ENCODE measurements at regions of chr18 and their contacts with region 1.

Region 1: GRCh38 chr18:44679056-44679905 is 1.4 kb upstream of the SETBP1 start:
- DNase-seq: peak; percentile 83
- H3K4me3 Mint-ChIP-seq: peak overlapping the region; percentile 52
- H3K27ac Mint-ChIP-seq: no peak overlapping the region
- H3K4me1 Mint-ChIP-seq: peaks cover 7% of the 10 kb centered on the region
- H3K27me3 Mint-ChIP-seq: peaks cover 22% of the 10 kb centered on the region

Region 2: GRCh38 chr18:43714343-43715010 is 964.8 kb before region 1 on chr18:
- CTCF ChIA-PET with region 1: no interaction called
- intact Hi-C with region 1: no loop called
- DNase-seq: no peak
- H3K4me3 Mint-ChIP-seq: no peak overlapping the region
- H3K27ac Mint-ChIP-seq: no peak overlapping the region
- H3K4me1 Mint-ChIP-seq: no peaks in the 10 kb centered on the region
- H3K27me3 Mint-ChIP-seq: no peaks in the 10 kb centered on the region

Region 3: GRCh38 chr18:44758861-44759631 is 79.8 kb after region 1 on chr18:
- CTCF ChIA-PET with region 1: no interaction called
- intact Hi-C with region 1: loop called (anchors 1 kb)
- DNase-seq: peak; percentile 76
- H3K4me3 Mint-ChIP-seq: no peak overlapping the region
- H3K27ac Mint-ChIP-seq: peak overlapping the region; percentile 80
- H3K4me1 Mint-ChIP-seq: peaks cover 27% of the 10 kb centered on the region
- H3K27me3 Mint-ChIP-seq: peaks cover 6% of the 10 kb centered on the region

Region 4: DNA sequence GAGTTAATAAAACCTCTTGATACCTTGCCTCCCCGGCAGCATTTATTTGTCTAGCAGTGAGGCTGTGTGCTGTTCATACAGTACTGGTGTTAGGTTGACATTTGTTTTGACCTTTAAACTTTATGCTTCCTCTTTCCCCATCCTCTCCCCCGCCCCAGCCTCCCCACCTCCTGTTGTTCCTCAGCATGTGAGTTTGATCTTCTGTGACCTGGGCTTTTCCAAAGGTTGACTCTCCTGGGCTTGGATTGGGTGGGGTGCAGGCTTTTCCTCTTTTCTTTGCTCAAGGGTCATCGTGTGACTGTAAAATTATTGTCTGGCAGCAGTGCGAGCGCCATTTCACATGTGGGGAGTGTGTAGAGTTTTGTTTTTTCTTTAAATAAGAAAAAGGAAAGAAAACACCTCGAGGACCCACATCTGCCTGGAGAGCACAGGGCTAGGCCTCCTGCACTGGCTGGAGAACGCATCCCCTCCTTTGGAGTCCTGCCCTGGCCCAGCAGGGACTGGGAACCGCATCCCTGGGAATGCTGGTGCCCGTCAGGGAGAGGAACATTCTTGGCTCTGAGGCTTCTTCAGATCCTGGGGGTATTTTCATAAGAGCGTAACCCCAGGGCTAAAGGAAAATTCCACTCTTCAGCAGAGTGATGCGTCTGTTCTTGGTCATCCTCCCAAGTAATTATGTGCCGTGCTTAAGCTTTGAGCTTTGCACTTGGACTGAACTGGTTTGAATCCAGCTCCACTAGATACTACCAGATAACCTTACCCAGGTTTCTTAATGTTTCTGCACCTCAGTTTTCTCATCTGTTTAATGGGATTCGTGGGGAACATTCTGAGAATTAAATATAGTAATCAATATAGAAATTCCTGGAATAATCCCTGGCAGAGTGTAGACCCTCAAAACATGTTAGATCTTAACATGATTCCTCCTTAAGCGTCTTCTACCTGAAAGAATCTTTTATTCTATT is 93.0 kb after region 1 on chr18:
- CTCF ChIA-PET with region 1: no interaction called
- intact Hi-C with region 1: no loop called
- DNase-seq: no peak
- H3K4me3 Mint-ChIP-seq: no peak overlapping the region
- H3K27ac Mint-ChIP-seq: no peak overlapping the region
- H3K4me1 Mint-ChIP-seq: peaks cover 2% of the 10 kb centered on the region
- H3K27me3 Mint-ChIP-seq: peaks cover 16% of the 10 kb centered on the region

Region 5: DNA sequence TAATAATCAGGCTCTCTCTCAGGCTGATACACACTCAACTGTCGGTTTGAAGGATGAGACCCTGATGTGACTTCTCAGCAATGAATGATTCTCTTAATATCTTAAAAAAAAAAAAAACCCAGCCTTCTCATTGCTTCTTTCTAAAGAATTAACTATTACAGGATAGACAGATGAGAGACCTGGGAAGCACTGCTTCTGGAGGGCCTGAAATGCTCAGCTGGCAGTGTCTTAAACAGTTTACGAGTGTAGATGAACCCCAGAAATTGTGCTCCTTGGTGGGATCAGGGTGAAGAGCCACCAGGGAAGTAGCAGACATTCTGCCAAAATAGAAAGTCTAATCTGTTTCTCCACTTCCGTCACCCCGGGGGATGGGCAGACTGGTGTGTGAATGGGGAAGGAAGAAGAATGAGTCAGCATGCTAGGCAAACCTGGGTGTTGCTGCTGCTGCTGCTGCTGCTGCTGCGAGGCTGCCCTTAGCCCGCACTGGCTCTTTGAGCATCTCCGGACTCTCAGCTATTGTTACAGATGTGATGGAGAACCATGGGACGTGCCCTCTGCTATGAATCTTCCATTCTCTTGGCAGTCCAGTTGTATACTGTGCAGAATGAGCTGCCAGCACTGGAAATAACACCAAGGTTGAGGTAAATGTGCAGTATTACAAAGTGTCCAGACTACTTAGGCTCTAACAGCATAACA is 159.8 kb after region 1 on chr18:
- CTCF ChIA-PET with region 1: no interaction called
- intact Hi-C with region 1: loop called (anchors 1 kb)
- DNase-seq: peak; percentile 85
- H3K4me3 Mint-ChIP-seq: no peak overlapping the region
- H3K27ac Mint-ChIP-seq: no peak overlapping the region
- H3K4me1 Mint-ChIP-seq: peaks cover 12% of the 10 kb centered on the region
- H3K27me3 Mint-ChIP-seq: peaks cover 22% of the 10 kb centered on the region

Region 6: DNA sequence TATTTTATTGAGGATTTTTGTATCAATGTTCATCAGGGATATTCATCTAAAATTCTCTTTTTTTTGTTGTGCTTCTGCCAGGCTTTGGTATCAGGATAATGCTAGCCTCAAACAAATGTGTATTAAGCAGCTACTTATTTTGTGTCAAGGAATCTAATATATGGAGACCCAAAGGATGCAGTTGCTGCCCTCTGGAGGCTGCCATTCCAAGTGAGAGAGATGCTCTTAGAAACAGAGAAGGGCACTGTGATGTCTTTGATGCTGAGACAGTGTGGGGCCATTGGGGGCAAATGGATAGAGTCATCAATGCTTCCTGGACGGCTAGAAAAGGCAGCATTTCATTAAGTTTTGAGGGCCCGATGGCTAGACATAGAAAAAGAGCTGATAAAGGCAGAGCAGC is 294.0 kb after region 1 on chr18:
- CTCF ChIA-PET with region 1: no interaction called
- intact Hi-C with region 1: loop called (anchors 1 kb)
- DNase-seq: peak; percentile 28
- H3K4me3 Mint-ChIP-seq: no peak overlapping the region
- H3K27ac Mint-ChIP-seq: no peak overlapping the region
- H3K4me1 Mint-ChIP-seq: no peaks in the 10 kb centered on the region
- H3K27me3 Mint-ChIP-seq: peaks cover 7% of the 10 kb centered on the region

Region 7: DNA sequence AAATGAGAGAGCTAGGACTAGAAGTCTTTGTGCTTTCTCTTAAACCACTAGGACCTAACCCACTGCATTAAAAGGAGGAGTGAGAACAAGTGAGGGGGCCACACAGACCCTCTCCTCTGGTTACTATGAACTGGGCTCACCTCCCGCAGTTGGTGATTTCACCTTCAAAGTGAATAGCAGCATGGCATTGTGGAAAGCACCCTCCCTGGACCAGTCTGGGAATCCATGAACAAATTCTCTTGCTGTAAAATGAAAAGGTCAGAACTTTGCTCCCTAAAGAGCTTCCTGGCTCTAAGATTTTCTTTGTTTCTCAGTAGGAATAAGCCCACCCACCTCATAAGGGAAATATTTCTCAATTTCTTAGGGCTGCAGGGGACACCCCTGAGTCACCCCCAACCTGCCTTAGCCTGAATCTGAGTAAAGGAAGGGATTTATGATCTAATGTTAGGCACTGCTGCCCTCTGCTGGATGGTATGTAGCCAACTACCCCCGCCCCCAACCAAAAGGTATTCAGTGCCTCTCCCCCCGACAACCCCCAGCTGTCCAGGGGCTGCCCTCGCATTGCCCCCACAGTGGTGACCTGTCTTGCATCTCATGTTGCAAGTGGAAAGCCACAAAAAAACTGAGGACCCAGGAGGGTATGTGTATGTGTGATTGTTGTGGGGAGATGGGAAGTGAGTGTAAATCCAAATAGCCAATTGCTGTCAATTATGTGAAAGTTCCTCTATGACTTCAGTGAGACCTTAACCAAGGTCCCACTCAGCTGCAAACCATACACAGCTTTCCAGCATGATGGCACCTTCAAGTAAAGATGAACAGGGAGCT is 705.1 kb after region 1 on chr18:
- CTCF ChIA-PET with region 1: interaction called, 3 read pairs
- intact Hi-C with region 1: loop called (anchors 5 kb)
- DNase-seq: peak; percentile 59
- H3K4me3 Mint-ChIP-seq: no peak overlapping the region
- H3K27ac Mint-ChIP-seq: no peak overlapping the region
- H3K4me1 Mint-ChIP-seq: no peaks in the 10 kb centered on the region
- H3K27me3 Mint-ChIP-seq: peaks cover 23% of the 10 kb centered on the region